Activated CD4-positive, alpha-beta T cell treated with anti-CD3 and anti-CD28 coated beads for 36 hours (primary cell): ENCODE measurements at regions of chr2 and their contacts with region 1.

Region 1: GRCh38 chr2:175251425-175252041 is 70.0 kb upstream of the ATP5MC3 start:
- DNase-seq: no peak
- ATAC-seq: no peak
- H3K4me3 Mint-ChIP-seq: no peak overlapping the region
- H3K27ac Mint-ChIP-seq: no peak overlapping the region
- H3K4me1 Mint-ChIP-seq: no peaks in the 10 kb centered on the region
- H3K27me3 Mint-ChIP-seq: peaks cover 22% of the 10 kb centered on the region

Region 2: DNA sequence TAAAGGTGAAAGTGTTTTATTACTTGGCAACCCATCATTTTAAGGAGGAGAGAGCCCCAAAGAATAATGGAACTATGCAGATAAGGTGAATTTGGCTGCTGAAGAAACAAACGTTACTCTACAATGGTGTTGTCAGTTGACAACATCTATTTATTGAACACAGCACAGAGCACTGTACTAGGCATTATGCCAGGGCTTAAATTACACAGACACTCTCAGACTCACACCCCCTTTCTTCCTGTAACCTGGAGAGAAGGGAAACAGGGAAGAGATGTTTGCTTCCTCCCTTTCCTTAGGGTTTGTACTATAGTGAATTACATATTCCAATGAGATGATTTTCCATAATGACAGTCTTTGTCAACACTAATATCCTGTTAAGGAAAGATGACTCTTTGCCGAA is 24.0 kb after region 1 on chr2:
- CTCF ChIA-PET with region 1: interaction called, 24 read pairs
- POLR2A ChIA-PET with region 1: no interaction called
- intact Hi-C with region 1: no loop called
- DNase-seq: no peak
- ATAC-seq: no peak
- H3K4me3 Mint-ChIP-seq: no peak overlapping the region
- H3K27ac Mint-ChIP-seq: no peak overlapping the region
- H3K4me1 Mint-ChIP-seq: no peaks in the 10 kb centered on the region
- H3K27me3 Mint-ChIP-seq: peaks cover 10% of the 10 kb centered on the region

Region 3: GRCh38 chr2:175282290-175282689 is 30.8 kb after region 1 on chr2:
- CTCF ChIA-PET with region 1: interaction called, 24 read pairs
- POLR2A ChIA-PET with region 1: no interaction called
- intact Hi-C with region 1: loop called in 1 of 2 experiments (anchors 2 kb)
- DNase-seq: no peak
- ATAC-seq: peak; percentile 91
- H3K4me3 Mint-ChIP-seq: no peak overlapping the region
- H3K27ac Mint-ChIP-seq: no peak overlapping the region
- H3K4me1 Mint-ChIP-seq: peaks cover 4% of the 10 kb centered on the region
- H3K27me3 Mint-ChIP-seq: peaks cover 2% of the 10 kb centered on the region

Region 4: GRCh38 chr2:175326801-175327200 is 75.3 kb after region 1 on chr2:
- CTCF ChIA-PET with region 1: interaction called, 10 read pairs
- POLR2A ChIA-PET with region 1: no interaction called
- intact Hi-C with region 1: no loop called
- DNase-seq: no peak
- ATAC-seq: no peak
- H3K4me3 Mint-ChIP-seq: no peak overlapping the region
- H3K27ac Mint-ChIP-seq: no peak overlapping the region
- H3K4me1 Mint-ChIP-seq: no peaks in the 10 kb centered on the region
- H3K27me3 Mint-ChIP-seq: peaks cover 4% of the 10 kb centered on the region